Thyroid gland (tissue), 4 donors: ENCODE measurements at regions of chr6 and their contacts with region 1.

Region 1: DNA sequence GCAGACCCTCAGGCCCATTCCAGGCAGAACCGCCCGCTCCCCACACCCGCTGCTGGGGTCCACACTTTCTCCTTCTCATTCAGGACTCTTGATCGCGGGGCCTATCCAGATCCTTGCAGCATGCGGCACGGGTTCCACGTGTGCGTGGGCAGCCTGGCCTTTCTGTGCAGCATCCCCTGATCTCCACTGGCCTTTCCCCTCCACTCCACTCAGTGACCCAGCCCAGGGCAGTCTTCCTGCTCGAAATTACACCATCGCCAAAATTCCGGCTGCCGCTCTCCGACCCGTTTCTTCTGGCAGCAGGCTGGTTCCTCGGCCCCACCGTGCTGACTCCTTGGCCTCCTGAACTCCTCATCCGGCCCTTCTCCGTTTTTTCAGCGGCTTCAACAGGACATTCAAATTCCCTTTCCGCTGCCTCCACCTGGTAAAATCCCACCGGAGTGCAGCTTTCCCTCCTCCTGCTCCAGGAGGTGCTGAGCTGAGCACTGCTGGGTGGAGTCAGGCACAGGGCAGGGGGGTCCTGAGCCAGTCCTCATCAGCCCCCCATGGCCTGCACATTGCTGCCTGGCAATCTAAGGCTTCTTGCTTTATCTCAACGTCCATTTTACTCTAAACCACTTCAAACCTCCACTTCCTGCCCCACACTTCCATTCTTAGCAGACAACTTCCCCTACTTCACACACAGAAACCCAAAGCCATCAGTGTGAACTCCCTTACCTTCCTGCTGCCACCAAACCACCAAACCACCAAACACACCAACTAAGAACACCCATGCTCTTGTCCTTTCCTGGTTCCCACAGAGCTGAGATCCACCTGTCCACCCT is 9.0 kb downstream of the SFT2D1 start:
- DNase-seq: no peak
- H3K4me3 ChIP-seq: no peak overlapping the region
- H3K27ac ChIP-seq: no peak overlapping the region
- H3K4me1 ChIP-seq: peaks cover 0 to 8% of the 10 kb centered on the region in 2 donors
- H3K27me3 ChIP-seq: no peaks in the 10 kb centered on the region
- CTCF ChIP-seq: no peak
- POLR2A ChIP-seq: no peak

Region 2: GRCh38 chr6:166382933-166383801 is 49.8 kb after region 1 on chr6 and contains the start of gene MPC1:
- intact Hi-C with region 1: loop called (anchors 10 kb)
- DNase-seq: peak; percentile 98
- H3K4me3 ChIP-seq: peak within 1 kb of the TSS; percentile 68 to 94 (median 80)
- H3K27ac ChIP-seq: peak within 1 kb of the TSS; percentile 84 to 97 (median 94)
- H3K4me1 ChIP-seq: peaks cover 21 to 25% of the 10 kb centered on the region in 2 donors
- H3K27me3 ChIP-seq: no peaks in the 10 kb centered on the region
- CTCF ChIP-seq: no peak
- POLR2A ChIP-seq: peak; percentile 49 to 96
- total RNA-seq, gene MPC1: 69.1 to 128 (median 103) TPM